CD4-positive, alpha-beta T cell (primary cell): ENCODE measurements at regions of chr13 and their contacts with region 1.

Region 1: DNA sequence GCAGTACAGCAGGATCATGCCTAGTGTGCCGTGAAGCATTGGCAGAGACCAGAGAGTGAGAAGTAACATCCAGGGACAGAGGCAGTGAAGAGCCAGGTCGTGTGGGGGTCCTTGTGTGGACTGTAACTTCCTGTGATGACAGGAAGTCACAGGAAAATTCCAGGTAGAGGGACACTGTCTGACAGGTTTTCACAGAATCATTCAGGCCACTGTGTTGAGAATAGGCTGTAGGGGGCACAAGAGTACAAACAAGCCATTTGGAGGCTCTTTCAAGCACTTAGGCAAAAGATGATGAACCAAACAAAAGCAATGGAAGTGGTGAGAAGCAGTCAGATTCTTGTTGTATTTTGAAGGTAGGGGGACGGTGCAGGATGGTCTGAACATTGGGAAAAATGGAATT is 46.4 kb downstream of the N4BP2L1 start:
- DNase-seq: peak in 5 of 14 experiments; percentile 2 to 57 (median 47)
- ATAC-seq: peak; percentile 56
- H3K4me3 ChIP-seq: no peak overlapping the region
- H3K4me3 Mint-ChIP-seq: no peak overlapping the region
- H3K27ac ChIP-seq: no peak overlapping the region
- H3K27ac Mint-ChIP-seq: no peak overlapping the region
- H3K4me1 ChIP-seq: no peaks in the 10 kb centered on the region
- H3K4me1 Mint-ChIP-seq: no peaks in the 10 kb centered on the region
- H3K27me3 ChIP-seq: no peaks in the 10 kb centered on the region
- H3K27me3 Mint-ChIP-seq: no peaks in the 10 kb centered on the region
- CTCF ChIP-seq: peak; percentile 57

Region 2: GRCh38 chr13:32443111-32443510 is 61.6 kb after region 1 on chr13:
- CTCF ChIA-PET with region 1: no interaction called
- POLR2A ChIA-PET with region 1: no interaction called
- intact Hi-C with region 1: loop called (anchors 1 kb)
- DNase-seq: peak in 11 of 14 experiments; percentile 9 to 76 (median 21)
- ATAC-seq: peak; percentile 77
- H3K4me3 ChIP-seq: no peak overlapping the region
- H3K4me3 Mint-ChIP-seq: no peak overlapping the region
- H3K27ac ChIP-seq: no peak overlapping the region
- H3K27ac Mint-ChIP-seq: no peak overlapping the region
- H3K4me1 ChIP-seq: no peaks in the 10 kb centered on the region
- H3K4me1 Mint-ChIP-seq: peaks cover 3% of the 10 kb centered on the region
- H3K27me3 ChIP-seq: no peaks in the 10 kb centered on the region
- H3K27me3 Mint-ChIP-seq: no peaks in the 10 kb centered on the region
- CTCF ChIP-seq: peak; percentile 53

Region 3: DNA sequence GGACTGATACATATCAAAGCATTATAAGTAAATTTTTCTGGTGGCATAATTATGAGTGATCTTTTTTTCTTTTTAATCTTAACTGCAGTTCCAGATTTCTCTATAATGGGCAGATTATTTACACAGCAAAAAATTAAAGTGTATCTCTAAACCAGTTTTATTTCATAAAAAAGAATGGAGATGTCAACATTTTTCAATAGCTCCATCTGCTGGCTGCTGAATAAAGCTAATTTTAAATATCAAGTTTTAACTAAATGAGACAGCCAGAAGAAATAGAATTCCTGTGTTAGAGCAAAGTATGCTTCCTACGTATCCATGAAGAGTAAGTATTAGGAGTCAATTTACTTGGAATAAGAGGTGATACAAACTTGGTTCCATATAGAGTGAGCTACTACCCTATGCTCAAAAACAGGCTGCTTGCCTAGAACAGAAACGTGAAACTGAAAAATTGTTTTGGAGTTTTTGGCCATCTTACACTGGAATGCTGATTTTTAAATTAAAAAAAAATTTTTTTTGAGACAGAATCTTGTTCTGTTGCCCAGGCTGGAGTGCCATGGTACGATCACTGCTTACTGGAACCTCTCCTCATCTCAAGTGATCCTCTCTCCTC is 199.7 kb after region 1 on chr13:
- CTCF ChIA-PET with region 1: no interaction called
- POLR2A ChIA-PET with region 1: no interaction called
- intact Hi-C with region 1: loop called (anchors 1 to 2 kb)
- DNase-seq: peak in 4 of 14 experiments; percentile 3 to 49 (median 39)
- ATAC-seq: no peak
- H3K4me3 ChIP-seq: no peak overlapping the region
- H3K4me3 Mint-ChIP-seq: no peak overlapping the region
- H3K27ac ChIP-seq: no peak overlapping the region
- H3K27ac Mint-ChIP-seq: no peak overlapping the region
- H3K4me1 ChIP-seq: peaks cover 7% of the 10 kb centered on the region
- H3K4me1 Mint-ChIP-seq: peaks cover 9% of the 10 kb centered on the region
- H3K27me3 ChIP-seq: no peaks in the 10 kb centered on the region
- H3K27me3 Mint-ChIP-seq: no peaks in the 10 kb centered on the region
- CTCF ChIP-seq: peak; percentile 74

Region 4: DNA sequence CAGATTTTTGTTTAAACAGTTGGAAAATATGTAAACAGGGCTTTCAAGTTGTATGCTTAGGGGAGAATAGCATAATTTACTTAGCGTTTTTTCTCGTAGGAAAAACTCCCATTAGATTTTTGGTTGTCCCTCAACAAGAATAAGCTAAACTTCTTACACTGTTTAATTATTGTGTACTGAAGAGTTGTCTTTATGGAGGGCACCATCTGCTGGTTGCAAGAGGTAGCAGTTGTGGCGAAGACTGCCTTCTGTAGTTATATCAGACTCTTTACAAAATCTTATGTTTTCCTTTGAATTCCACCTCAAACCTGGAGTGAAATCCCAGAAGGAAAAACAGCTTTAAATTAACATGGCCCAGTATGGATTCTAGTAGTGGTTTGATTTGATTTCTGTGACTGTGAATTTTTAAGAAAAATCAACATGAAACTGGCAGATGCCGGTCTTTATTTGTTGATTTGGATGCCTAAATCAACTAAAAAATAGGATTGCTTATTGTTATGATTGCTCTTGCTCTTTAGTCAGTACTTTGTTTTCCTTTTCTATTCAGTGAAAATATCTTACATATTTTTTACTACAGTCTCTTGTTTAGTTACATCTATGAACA is 258.1 kb after region 1 on chr13:
- CTCF ChIA-PET with region 1: no interaction called
- POLR2A ChIA-PET with region 1: no interaction called
- intact Hi-C with region 1: loop called in 1 of 2 experiments (anchors 10 kb)
- DNase-seq: peak; percentile 22 to 82 (median 36)
- ATAC-seq: peak; percentile 98
- H3K4me3 ChIP-seq: no peak overlapping the region
- H3K4me3 Mint-ChIP-seq: no peak overlapping the region
- H3K27ac ChIP-seq: no peak overlapping the region
- H3K27ac Mint-ChIP-seq: no peak overlapping the region
- H3K4me1 ChIP-seq: no peaks in the 10 kb centered on the region
- H3K4me1 Mint-ChIP-seq: peaks cover 35% of the 10 kb centered on the region
- H3K27me3 ChIP-seq: no peaks in the 10 kb centered on the region
- H3K27me3 Mint-ChIP-seq: no peaks in the 10 kb centered on the region
- CTCF ChIP-seq: peak; percentile 88